Motor neuron (in vitro differentiated cells): ENCODE measurements at regions of chr21 and their contacts with region 1.

Region 1: GRCh38 chr21:29499734-29500343 is 201.1 kb downstream of the BACH1 start:
- ATAC-seq: peak in 3 of 8 experiments; percentile 68 to 82 (median 69)
- H3K4me3 ChIP-seq: no peak overlapping the region
- H3K27ac ChIP-seq: no peak overlapping the region
- H3K4me1 ChIP-seq: no peaks in the 10 kb centered on the region

Region 2: DNA sequence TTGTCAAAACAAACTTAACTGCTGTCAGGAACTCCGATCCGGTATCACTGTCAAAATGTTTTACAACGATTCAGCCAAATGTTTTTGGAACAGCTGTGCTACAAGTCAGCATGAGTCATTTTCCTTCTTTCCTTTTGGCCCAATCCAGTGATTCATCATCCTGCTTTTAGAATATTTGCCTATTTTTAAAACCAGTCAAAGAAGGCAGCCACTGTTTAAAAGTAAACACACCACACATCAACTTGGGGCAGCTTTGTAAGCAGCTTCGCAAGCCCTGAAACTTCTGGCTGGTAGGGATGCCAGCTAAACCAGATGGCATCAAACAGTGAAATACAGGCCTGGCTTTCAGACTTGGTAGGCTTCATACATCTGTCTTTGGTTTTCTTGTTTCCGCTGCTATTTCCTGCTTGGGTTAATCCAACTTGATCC is 354.5 kb before region 1 on chr21:
- in situ Hi-C with region 1: no loop called
- ATAC-seq: peak in 2 of 8 experiments; percentile 89 to 90
- H3K4me3 ChIP-seq: no peak overlapping the region
- H3K27ac ChIP-seq: no peak overlapping the region
- H3K4me1 ChIP-seq: no peaks in the 10 kb centered on the region

Region 3: DNA sequence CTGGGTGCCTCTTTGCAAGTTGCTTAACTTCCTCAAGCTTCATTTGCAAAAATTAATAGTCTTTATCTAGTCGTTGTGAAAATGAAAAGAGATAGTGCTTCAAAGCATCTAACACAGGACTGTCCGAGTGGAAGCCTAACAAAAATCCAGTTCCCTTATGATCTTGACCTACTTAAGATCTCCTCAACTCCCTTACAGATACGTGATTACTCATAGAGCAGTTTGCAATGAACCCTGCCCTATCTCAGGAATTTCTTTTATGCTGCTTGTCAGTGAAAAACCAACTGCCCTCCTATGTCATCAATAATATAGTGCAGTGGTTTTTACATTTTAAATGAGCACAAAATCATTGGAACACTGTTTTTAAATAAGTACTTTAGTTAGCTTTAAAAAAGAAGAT is 113.2 kb after region 1 on chr21:
- in situ Hi-C with region 1: loop called in 1 of 9 experiments (anchors 25 kb)
- ATAC-seq: peak in 2 of 8 experiments; percentile 81 to 90
- H3K4me3 ChIP-seq: no peak overlapping the region
- H3K27ac ChIP-seq: no peak overlapping the region
- H3K4me1 ChIP-seq: peaks cover 0 to 8% of the 10 kb centered on the region in 2 donors

Region 4: DNA sequence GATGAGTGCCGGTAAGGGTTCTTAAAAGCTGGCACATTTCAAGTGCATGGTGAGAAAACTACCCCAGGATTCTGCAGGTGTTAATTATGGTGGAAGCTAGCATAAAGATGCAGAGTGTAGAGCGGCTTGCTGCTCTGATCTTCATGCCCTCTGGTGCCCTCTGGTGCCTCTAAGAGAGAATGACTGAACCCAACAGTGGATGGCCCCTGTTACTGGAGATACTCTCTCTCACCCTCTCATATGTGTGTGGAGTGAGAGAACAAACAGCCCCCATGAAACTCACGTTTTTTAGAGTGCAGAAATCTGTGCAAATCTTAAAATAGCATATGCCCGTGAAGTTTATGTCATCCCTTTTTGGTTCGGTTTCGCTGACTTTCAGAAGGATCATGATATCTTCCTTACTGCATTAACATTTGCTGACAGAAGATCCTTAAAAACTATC is 349.9 kb after region 1 on chr21:
- in situ Hi-C with region 1: loop called in 2 of 9 experiments (anchors 25 kb)
- ATAC-seq: peak; percentile 72 to 100 (median 88)
- H3K4me3 ChIP-seq: no peak overlapping the region
- H3K27ac ChIP-seq: no peak overlapping the region
- H3K4me1 ChIP-seq: no peaks in the 10 kb centered on the region